ENCODE measurements at regions of chr13 and their contacts with region 1.

Region 1: GRCh38 chr13:108895220-108895704 is 265.9 kb downstream of the MYO16 start:
- DNase-seq: peak; percentile 67
- H3K4me3 Mint-ChIP-seq: no peak overlapping the region
- H3K27ac Mint-ChIP-seq: no peak overlapping the region
- H3K4me1 Mint-ChIP-seq: no peaks in the 10 kb centered on the region
- H3K27me3 Mint-ChIP-seq: peaks cover 29% of the 10 kb centered on the region
- CTCF ChIP-seq: peak; percentile 60

Region 2: DNA sequence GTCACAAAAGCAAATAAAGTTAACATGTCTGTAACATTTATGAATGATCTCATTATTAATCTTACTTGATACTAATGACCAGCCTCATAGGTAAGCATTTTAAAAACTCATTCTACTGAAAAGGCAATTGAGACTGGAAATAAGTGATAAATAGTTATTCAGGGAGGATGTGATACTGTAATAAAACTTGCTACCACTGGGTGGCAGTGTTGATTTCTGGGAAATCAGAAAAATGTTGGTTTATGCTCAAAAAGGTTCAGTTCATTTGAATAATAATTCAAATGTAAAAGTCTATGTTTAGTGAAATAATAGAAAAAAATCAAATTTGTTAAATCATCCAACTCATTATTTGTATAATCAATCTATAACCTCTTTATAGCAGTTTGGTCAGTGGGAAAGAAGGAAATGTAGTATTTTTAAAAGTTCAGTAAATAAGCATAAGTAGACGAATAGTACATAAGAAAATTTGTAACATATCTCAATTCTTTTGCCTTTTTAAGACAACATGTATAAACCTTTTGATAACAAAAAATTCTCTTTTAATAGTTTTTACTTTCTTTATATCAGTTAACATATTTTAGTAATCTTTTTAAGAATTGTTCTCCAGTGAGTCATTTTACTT is 667.5 kb before region 1 on chr13:
- CTCF ChIA-PET with region 1: interaction called, 3 read pairs
- POLR2A ChIA-PET with region 1: no interaction called
- intact Hi-C with region 1: loop called (anchors 5 kb)
- DNase-seq: peak; percentile 46
- H3K4me3 Mint-ChIP-seq: no peak overlapping the region
- H3K27ac Mint-ChIP-seq: no peak overlapping the region
- H3K4me1 Mint-ChIP-seq: peaks cover 12% of the 10 kb centered on the region
- H3K27me3 Mint-ChIP-seq: no peaks in the 10 kb centered on the region
- CTCF ChIP-seq: peak; percentile 56

Region 3: DNA sequence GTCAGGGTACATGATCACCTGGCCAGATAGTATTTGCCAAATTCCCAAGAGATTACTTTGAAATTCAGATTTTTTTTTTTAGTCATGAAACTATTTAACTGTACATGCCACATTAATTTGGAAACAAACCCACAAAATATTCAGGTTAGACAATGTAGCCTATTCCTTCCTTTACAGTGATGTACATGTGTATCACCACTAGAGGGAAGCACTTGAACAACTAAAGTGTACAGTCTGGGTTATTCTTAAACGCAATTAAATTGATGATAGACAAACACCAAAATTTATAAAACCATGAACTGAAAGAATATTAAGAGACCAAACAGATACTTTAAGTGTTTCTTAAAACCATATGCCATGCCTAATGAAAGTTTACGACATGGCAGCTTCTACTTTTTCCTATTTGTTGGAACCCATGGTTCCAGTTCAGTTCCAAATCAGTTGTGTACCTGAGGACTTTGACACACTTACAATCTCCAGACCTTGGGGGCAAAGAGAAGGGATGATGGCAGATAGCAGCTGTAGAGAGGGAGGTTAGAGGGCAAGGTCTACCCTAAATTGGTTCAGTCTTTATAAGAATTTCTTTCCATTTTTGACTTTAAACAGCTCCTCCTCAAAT is 572.9 kb before region 1 on chr13:
- CTCF ChIA-PET with region 1: interaction called, 42 read pairs
- POLR2A ChIA-PET with region 1: no interaction called
- intact Hi-C with region 1: loop called (anchors 2 kb)
- DNase-seq: peak; percentile 59
- H3K4me3 Mint-ChIP-seq: no peak overlapping the region
- H3K27ac Mint-ChIP-seq: no peak overlapping the region
- H3K4me1 Mint-ChIP-seq: no peaks in the 10 kb centered on the region
- H3K27me3 Mint-ChIP-seq: peaks cover 88% of the 10 kb centered on the region
- CTCF ChIP-seq: peak; percentile 59

Region 4: GRCh38 chr13:108328848-108329247 is 566.4 kb before region 1 on chr13:
- CTCF ChIA-PET with region 1: interaction called, 42 read pairs
- POLR2A ChIA-PET with region 1: no interaction called
- intact Hi-C with region 1: no loop called
- DNase-seq: no peak
- H3K4me3 Mint-ChIP-seq: no peak overlapping the region
- H3K27ac Mint-ChIP-seq: no peak overlapping the region
- H3K4me1 Mint-ChIP-seq: no peaks in the 10 kb centered on the region
- H3K27me3 Mint-ChIP-seq: peaks cover 100% of the 10 kb centered on the region
- CTCF ChIP-seq: no peak

Region 5: GRCh38 chr13:108342369-108343289 is 552.6 kb before region 1 on chr13:
- CTCF ChIA-PET with region 1: interaction called, 10 read pairs
- POLR2A ChIA-PET with region 1: no interaction called
- intact Hi-C with region 1: loop called (anchors 1 kb)
- DNase-seq: peak; percentile 52
- H3K4me3 Mint-ChIP-seq: no peak overlapping the region
- H3K27ac Mint-ChIP-seq: no peak overlapping the region
- H3K4me1 Mint-ChIP-seq: no peaks in the 10 kb centered on the region
- H3K27me3 Mint-ChIP-seq: peaks cover 90% of the 10 kb centered on the region
- CTCF ChIP-seq: peak; percentile 47

Region 6: DNA sequence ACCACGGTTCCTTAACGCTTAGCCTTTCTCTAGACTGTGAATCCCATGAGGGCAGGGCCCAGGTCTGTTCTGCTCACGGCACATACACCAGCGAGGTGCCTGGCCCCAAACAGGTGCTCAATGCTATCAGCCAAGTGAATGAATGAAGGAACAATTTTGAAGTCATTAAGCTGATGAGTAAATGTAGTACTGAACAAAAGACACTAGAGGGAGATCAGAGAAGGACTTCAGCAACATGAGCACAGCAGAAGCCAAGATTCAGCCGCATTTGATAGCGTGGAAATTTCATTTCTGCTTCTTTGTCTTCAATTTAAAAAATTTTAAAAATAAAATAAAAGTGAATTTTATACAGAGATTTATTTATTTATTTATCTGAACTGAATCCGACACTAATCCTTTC is 285.9 kb before region 1 on chr13:
- CTCF ChIA-PET with region 1: interaction called, 121 read pairs
- POLR2A ChIA-PET with region 1: no interaction called
- intact Hi-C with region 1: loop called (anchors 1 kb)
- DNase-seq: peak; percentile 53
- H3K4me3 Mint-ChIP-seq: no peak overlapping the region
- H3K27ac Mint-ChIP-seq: no peak overlapping the region
- H3K4me1 Mint-ChIP-seq: no peaks in the 10 kb centered on the region
- H3K27me3 Mint-ChIP-seq: peaks cover 57% of the 10 kb centered on the region
- CTCF ChIP-seq: peak; percentile 47

Region 7: DNA sequence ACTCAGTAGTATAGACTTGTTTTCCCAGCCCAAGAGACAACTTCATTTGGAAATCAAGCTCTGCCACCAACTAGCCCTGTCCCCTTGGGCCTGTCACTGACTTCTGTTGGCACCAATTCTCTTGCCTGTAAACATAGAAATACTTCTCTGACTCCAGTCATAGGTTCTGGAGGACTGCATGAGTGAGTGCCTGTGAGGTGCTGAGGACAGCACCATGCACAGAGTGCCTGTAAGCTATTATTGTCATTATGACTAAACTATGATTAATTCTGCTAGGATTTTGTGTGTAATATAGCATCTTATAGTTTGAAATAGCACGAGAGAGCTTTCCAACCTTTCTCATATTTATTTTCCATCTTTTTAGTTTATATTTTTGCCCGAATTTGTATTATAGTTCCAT is 18.0 kb before region 1 on chr13:
- CTCF ChIA-PET with region 1: interaction called, 11 read pairs
- POLR2A ChIA-PET with region 1: no interaction called
- intact Hi-C with region 1: no loop called
- DNase-seq: peak; percentile 23
- H3K4me3 Mint-ChIP-seq: no peak overlapping the region
- H3K27ac Mint-ChIP-seq: no peak overlapping the region
- H3K4me1 Mint-ChIP-seq: no peaks in the 10 kb centered on the region
- H3K27me3 Mint-ChIP-seq: peaks cover 39% of the 10 kb centered on the region
- CTCF ChIP-seq: no peak

Region 8: DNA sequence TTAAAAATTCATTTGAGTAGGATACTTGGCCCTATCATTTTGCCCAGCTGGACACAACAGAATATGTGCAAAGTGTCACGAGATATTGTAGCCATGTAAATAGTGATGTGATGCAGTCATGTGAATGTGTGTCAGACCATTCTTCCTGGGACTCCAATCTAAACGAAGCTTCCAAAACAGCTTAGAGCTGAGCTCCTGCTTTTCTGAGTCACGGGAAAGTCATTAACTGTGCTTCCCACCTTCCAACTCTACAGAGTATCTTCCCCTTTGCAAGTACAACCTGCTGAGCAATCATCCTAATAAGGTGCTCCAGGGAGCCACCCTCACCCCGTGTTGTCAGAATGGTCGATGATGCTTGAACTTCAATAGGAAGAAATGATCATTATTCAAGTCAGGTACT is 28.9 kb after region 1 on chr13:
- CTCF ChIA-PET with region 1: no interaction called
- POLR2A ChIA-PET with region 1: no interaction called
- intact Hi-C with region 1: no loop called
- DNase-seq: peak; percentile 10
- H3K4me3 Mint-ChIP-seq: no peak overlapping the region
- H3K27ac Mint-ChIP-seq: no peak overlapping the region
- H3K4me1 Mint-ChIP-seq: peaks cover 27% of the 10 kb centered on the region
- H3K27me3 Mint-ChIP-seq: no peaks in the 10 kb centered on the region
- CTCF ChIP-seq: no peak

Region 9: DNA sequence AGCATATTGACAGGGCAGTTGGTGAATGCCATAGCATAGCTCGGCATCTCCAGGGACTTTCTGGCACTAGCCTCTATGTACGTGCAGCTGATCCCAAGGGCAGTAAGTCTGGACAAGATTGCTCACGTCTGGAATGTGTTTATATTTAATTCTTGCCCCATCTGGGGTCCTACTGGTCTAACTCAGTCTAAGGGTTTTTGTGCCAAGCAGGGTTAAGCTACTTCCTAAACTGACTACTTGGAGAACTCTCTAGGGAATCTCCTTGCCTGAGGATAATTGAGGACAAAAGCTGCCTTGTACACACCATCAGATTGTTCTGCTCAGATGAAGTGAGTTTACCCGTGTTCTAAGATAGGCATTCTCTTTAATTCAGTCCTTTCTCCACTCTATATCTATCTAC is 92.3 kb after region 1 on chr13:
- CTCF ChIA-PET with region 1: no interaction called
- POLR2A ChIA-PET with region 1: no interaction called
- intact Hi-C with region 1: no loop called
- DNase-seq: peak; percentile 32
- H3K4me3 Mint-ChIP-seq: no peak overlapping the region
- H3K27ac Mint-ChIP-seq: no peak overlapping the region
- H3K4me1 Mint-ChIP-seq: no peaks in the 10 kb centered on the region
- H3K27me3 Mint-ChIP-seq: no peaks in the 10 kb centered on the region
- CTCF ChIP-seq: no peak

Measured in MCF 10A (cell line).